Posterior cingulate gyrus (tissue), 11 donors: ENCODE measurements at regions of chr12 and their contacts with region 1.

Region 1: GRCh38 chr12:94133964-94134795 is 14.2 kb upstream of the PLXNC1 start:
- DNase-seq: no peak

Region 2: GRCh38 chr12:94020335-94020734 is 113.8 kb before region 1 on chr12:
- intact Hi-C with region 1: no loop called
- DNase-seq: no peak

Region 3: GRCh38 chr12:94254270-94254669 is 120.1 kb after region 1 on chr12:
- intact Hi-C with region 1: no loop called
- DNase-seq: no peak

Region 4: GRCh38 chr12:94532490-94533422 is 398.6 kb after region 1 on chr12:
- intact Hi-C with region 1: loop called (anchors 1 kb)
- DNase-seq: peak; percentile 39 to 96 (median 78)